ENCODE measurements at regions of chr11 and their contacts with region 1.

Region 1: DNA sequence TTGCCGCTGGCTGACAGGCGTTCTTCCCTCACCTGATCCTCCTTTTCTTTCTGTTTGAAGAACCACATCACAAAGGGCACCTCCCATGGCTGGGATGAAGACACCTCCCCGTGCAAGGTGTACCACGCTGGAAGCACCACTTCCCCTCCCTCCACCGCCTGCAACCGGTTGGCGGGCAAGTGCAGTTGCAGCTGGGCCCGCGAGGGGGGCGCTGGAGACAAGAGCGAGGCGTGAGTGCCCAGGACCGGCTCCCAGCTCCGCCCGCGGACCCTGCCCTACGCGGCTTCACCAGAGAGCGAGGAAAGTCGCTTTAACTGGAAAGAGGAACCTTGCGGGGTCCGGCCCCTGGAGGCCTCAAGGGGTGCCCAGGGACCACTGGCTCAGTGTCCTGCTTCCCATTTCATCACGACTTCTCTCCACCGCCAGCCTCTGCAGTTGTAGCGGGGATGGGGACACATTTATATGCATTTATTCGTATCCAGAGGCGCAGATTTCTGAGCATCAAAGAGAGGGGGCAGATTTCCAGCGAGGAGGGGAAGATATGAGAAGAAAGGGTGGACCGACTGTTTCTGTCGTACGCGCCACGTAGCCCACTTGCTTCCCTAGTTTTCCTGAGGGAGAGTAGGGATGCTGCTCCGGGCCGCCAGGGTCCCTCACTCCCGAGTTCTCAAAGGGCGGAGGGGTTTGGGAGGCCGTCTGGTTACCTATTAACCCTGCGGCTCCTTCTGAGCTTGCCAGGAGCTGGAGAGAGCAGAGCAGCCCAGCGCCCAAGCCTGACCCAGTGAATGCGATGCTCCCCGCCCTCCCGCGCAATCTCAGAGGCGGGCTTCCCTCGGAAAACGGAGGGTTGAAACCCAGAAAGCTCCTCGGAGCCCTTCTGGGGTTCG is 3.5 kb downstream of the ESAM start:
- DNase-seq: peak; percentile 80
- H3K4me3 Mint-ChIP-seq: no peak overlapping the region
- H3K27ac Mint-ChIP-seq: no peak overlapping the region
- H3K4me1 Mint-ChIP-seq: peaks cover 41% of the 10 kb centered on the region
- H3K27me3 Mint-ChIP-seq: peaks cover 77% of the 10 kb centered on the region

Region 2: DNA sequence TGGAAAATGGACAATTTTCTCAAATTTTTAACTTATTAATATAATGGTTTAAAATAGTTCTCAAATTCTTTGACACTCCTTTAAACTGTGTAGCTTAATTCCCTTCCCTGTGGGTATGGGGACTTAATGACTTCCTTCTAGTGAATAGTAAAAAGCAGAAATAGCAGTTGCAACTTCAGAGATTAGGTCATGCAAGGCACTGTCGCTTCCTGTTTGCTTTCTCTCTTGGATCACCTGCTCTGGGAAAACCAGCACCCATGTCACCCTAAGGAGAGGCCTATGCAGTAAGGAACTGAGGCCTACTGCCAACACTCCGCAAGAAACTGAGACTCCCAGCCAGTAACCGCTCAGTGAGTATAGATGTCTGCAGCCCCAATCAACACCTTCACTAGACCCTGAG is 152.8 kb before region 1 on chr11:
- CTCF ChIA-PET with region 1: no interaction called
- DNase-seq: no peak
- H3K4me3 Mint-ChIP-seq: no peak overlapping the region
- H3K27ac Mint-ChIP-seq: no peak overlapping the region
- H3K4me1 Mint-ChIP-seq: no peaks in the 10 kb centered on the region
- H3K27me3 Mint-ChIP-seq: peaks cover 3% of the 10 kb centered on the region

Region 3: GRCh38 chr11:124746621-124747243 is 11.8 kb before region 1 on chr11:
- CTCF ChIA-PET with region 1: interaction called, 67 read pairs
- DNase-seq: peak; percentile 86
- H3K4me3 Mint-ChIP-seq: peak overlapping the region; percentile 84
- H3K27ac Mint-ChIP-seq: peak overlapping the region; percentile 86
- H3K4me1 Mint-ChIP-seq: peaks cover 47% of the 10 kb centered on the region
- H3K27me3 Mint-ChIP-seq: peaks cover 55% of the 10 kb centered on the region

Region 4: GRCh38 chr11:124800226-124800929 is 41.8 kb after region 1 on chr11 and contains the start of gene MSANTD2:
- CTCF ChIA-PET with region 1: interaction called, 39 read pairs
- DNase-seq: peak; percentile 86
- H3K4me3 Mint-ChIP-seq: peak within 1 kb of the TSS; percentile 94
- H3K27ac Mint-ChIP-seq: peak within 1 kb of the TSS; percentile 96
- H3K4me1 Mint-ChIP-seq: peaks cover 27% of the 10 kb centered on the region
- H3K27me3 Mint-ChIP-seq: peaks cover 9% of the 10 kb centered on the region